ENCODE measurements at regions of chr13 and their contacts with region 1.

Region 1: DNA sequence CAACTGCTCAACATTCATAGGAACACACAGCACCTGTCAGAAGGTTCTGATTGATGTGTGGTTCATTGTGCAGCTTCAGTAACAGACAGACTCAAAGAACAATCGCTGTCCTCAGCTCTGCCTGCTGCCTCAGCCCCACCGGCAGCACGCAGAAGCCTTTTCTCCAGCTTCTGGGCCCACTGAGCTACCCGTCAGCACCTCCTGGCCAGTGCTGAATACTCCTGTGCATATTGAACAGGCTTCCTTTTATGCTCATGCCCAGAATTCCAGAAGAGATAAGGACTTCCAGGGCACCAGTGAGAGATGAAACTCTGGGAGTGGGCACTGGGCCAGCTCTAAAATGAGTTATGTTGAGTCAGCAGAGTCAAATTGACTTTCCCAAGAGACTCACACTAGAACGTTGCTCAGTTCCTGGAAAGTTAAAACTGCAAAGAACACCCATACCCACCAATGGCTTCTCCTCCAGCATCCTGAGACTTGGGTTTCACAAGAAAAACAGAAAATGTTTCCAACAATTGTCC is 119.3 kb downstream of the COL4A1 start:
- DNase-seq: no peak
- H3K4me3 ChIP-seq: no peak overlapping the region
- H3K27ac ChIP-seq: peak overlapping the region; percentile 17 to 20
- H3K4me1 ChIP-seq: peaks cover 0 to 6% of the 10 kb centered on the region in 2 donors
- H3K27me3 ChIP-seq: no peaks in the 10 kb centered on the region
- CTCF ChIP-seq: no peak

Region 2: DNA sequence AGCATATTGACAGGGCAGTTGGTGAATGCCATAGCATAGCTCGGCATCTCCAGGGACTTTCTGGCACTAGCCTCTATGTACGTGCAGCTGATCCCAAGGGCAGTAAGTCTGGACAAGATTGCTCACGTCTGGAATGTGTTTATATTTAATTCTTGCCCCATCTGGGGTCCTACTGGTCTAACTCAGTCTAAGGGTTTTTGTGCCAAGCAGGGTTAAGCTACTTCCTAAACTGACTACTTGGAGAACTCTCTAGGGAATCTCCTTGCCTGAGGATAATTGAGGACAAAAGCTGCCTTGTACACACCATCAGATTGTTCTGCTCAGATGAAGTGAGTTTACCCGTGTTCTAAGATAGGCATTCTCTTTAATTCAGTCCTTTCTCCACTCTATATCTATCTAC is 1200.2 kb before region 1 on chr13:
- intact Hi-C with region 1: loop called (anchors 10 kb)
- DNase-seq: no peak
- H3K4me3 ChIP-seq: no peak overlapping the region
- H3K27ac ChIP-seq: no peak overlapping the region
- H3K4me1 ChIP-seq: peaks cover 0 to 3% of the 10 kb centered on the region in 2 donors
- H3K27me3 ChIP-seq: no peaks in the 10 kb centered on the region
- CTCF ChIP-seq: no peak

Region 3: GRCh38 chr13:109447667-109448066 is 740.0 kb before region 1 on chr13:
- intact Hi-C with region 1: no loop called
- DNase-seq: no peak
- H3K4me3 ChIP-seq: no peak overlapping the region
- H3K27ac ChIP-seq: no peak overlapping the region
- H3K4me1 ChIP-seq: no peaks in the 10 kb centered on the region
- H3K27me3 ChIP-seq: no peaks in the 10 kb centered on the region
- CTCF ChIP-seq: no peak